Upper lobe of right lung (tissue), 1 donor: ENCODE measurements at regions of chr2 and their contacts with region 1.

Region 1: DNA sequence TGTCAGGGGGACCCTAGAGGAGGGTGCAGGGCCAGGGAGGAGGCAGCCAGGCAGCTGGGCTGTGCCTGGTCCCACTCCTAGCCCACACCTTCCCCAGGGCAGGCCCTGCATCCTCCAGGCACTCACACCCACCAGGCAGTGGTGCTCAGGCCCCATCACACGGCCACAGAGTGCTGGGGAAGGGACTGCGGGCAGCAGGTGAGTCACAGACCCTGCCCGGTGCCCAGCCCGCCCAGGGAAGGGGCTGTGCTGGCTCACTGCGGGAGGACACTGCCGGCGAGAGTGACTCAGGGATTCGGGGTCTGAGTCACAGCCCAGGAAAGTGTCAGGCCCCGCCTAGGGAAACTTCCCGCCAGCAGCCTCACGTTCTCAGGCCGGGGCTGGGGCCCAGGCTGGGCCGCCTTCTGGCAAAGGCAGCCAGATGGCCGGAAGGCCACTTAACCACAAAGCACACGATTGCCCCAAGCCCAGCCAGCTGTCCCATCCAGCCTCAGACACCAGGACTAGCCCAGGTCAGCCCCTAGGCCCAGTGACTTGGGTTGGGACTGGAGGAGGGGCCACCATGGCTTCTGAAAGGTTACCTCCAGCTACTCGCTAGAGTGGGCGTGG is 42.2 kb downstream of the BIN1 start:
- DNase-seq: peak; percentile 86
- ATAC-seq: peak; percentile 81
- H3K4me3 ChIP-seq: no peak overlapping the region
- H3K27ac ChIP-seq: peak overlapping the region; percentile 78
- H3K4me1 ChIP-seq: peaks cover 36% of the 10 kb centered on the region
- H3K27me3 ChIP-seq: no peaks in the 10 kb centered on the region
- CTCF ChIP-seq: no peak

Region 2: DNA sequence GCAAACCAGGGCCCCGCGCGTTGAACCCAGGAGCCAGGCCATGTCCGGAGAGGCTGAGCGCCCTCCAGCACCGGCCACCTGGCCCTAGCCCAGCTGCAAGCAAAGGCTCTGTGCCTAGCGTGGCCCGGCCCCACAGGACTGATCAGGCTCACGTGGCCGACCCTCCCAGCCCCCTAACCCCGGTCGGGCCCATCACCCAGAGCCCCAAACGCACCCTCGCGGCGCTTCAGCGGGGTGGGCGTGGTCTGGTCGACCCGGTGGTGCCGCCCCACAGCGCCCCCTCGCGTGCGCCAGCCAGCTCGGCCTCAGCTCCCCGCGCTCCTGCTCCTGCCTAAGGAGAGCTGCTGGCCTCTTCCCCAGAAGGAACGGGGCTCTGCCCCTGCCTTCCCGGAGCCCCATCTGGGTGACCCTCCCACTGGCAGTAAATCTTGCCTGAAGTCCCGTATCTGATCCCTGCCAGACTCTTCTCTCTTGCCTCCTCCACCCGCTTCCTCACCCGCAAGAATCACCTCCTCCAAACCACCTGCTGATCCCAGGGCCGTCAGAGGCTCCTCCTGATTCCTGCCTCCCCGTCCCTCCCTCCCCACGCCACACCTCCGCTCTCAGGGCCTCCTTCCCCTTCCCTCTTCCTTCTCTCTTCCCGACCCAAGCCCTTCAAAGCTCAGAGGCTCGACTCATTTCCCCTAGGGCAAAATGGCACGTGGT is 178.4 kb before region 1 on chr2:
- intact Hi-C with region 1: no loop called
- DNase-seq: peak; percentile 81
- ATAC-seq: peak; percentile 89
- H3K4me3 ChIP-seq: peak overlapping the region; percentile 37
- H3K27ac ChIP-seq: no peak overlapping the region
- H3K4me1 ChIP-seq: no peaks in the 10 kb centered on the region
- H3K27me3 ChIP-seq: no peaks in the 10 kb centered on the region
- CTCF ChIP-seq: peak; percentile 59

Region 3: GRCh38 chr2:127106951-127107621 is 42.3 kb after region 1 on chr2 and contains the start of gene BIN1:
- intact Hi-C with region 1: loop called (anchors 5 kb)
- DNase-seq: peak; percentile 96
- ATAC-seq: peak; percentile 92
- H3K4me3 ChIP-seq: peak within 1 kb of the TSS; percentile 90
- H3K27ac ChIP-seq: peak within 1 kb of the TSS; percentile 71
- H3K4me1 ChIP-seq: peaks cover 4% of the 10 kb centered on the region
- H3K27me3 ChIP-seq: no peaks in the 10 kb centered on the region
- CTCF ChIP-seq: no peak
- total RNA-seq, gene BIN1: 33.4 TPM

Region 4: DNA sequence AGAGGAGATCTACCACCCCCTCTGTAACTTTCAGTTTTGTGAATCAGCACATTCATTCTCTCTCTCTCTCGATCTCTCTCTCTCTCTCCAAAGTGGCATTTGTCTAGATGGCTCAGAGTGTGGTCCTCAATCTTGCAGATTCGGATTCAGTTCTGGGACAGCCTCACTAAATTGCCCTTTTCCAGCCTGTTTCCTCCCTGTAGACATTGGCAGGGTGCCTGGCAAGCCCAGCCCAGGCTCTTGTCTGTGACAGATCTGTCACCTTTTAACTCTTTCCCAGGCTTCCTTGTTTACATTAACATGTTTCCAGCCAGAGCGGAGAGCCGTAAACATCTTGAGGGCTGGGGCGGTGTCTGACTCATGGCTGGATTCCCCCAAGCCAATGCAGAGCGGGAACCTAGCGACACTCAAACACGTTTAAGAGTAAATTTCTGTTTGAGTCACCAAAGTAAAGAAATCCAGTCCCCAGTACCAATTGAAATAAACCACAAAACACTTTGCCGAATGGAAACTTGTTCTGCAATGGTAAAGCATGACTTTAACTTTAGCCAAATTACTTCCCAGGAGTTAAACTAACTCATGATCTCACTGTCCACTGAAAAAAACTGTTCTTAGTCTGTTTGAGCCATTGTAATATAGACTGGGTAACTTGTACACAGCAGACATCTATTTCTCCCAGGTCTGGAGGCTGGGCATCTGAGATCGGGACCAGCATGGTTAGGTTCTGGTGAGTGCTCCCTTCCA is 161.9 kb after region 1 on chr2:
- intact Hi-C with region 1: no loop called
- DNase-seq: peak; percentile 88
- ATAC-seq: peak; percentile 94
- H3K4me3 ChIP-seq: no peak overlapping the region
- H3K27ac ChIP-seq: peak overlapping the region; percentile 32
- H3K4me1 ChIP-seq: no peaks in the 10 kb centered on the region
- H3K27me3 ChIP-seq: peaks cover 17% of the 10 kb centered on the region
- CTCF ChIP-seq: no peak